ENCODE measurements at regions of chr9 and their contacts with region 1.

Region 1: GRCh38 chr9:33290247-33291030 is at the start of gene NFX1:
- DNase-seq: peak; percentile 96
- H3K4me3 ChIP-seq: peak within 1 kb of the TSS; percentile 72
- H3K27ac ChIP-seq: peak within 1 kb of the TSS; percentile 97
- H3K4me1 ChIP-seq: peaks cover 3% of the 10 kb centered on the region
- H3K27me3 ChIP-seq: no peaks in the 10 kb centered on the region
- CTCF ChIP-seq: peak in 1 of 4 experiments; percentile 33
- POLR2A ChIP-seq: peak; percentile 92
- total RNA-seq, gene NFX1: 30.8 to 39.5 TPM

Region 2: GRCh38 chr9:33329117-33329563 is 38.7 kb after region 1 on chr9:
- intact Hi-C with region 1: loop called (anchors 5 kb)
- DNase-seq: peak; percentile 96
- H3K4me3 ChIP-seq: no peak overlapping the region
- H3K27ac ChIP-seq: peak overlapping the region; percentile 77 to 83
- H3K4me1 ChIP-seq: peaks cover 12% of the 10 kb centered on the region
- H3K27me3 ChIP-seq: no peaks in the 10 kb centered on the region
- CTCF ChIP-seq: no peak
- POLR2A ChIP-seq: no peak

Region 3: DNA sequence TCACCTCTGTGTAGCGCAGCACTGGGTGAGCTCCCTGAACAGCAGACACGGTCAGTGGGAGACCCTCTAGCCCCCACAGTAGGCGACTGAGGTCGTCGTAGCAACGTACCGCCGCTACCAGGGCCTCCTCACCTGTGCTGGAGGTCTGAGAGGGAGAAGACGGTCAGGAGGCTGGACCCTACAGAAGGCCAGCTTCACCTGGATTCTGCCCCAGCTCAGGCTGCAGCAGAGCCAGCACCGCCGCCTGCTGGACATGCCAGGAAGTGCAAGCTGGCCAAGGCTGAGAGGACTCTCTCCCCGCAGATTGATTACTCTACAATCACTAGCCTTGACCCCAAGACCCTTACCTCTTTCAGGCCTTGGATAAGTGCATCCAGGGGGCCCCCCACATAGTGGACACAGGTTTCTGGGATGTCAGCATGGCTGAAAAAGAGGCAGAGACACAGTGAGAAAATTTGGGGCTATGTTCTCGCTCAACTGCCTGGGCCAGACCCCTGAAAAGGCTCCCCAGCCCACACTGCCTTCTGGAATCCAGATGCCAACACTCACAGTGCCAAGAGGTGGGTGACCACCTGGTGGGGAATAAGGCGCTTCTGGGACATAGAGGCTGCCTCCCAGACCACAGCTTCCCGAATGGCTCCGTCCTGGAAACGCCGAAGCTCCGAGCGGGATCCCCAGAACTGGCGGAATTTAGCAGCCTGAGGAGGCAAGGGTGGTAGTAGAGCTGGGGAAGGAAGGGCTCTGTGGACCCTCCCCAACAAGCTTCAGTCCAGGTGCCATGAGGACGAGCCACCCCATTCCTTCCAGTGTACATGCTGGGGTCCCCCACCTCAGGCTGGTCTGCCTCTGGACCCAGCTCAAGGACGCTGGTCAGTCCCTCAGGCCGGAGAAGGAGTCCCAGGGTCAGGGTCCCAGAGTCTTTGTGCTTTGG is 176.4 kb after region 1 on chr9:
- intact Hi-C with region 1: loop called (anchors 5 kb)
- DNase-seq: peak; percentile 64
- H3K4me3 ChIP-seq: no peak overlapping the region
- H3K27ac ChIP-seq: no peak overlapping the region
- H3K4me1 ChIP-seq: peaks cover 3% of the 10 kb centered on the region
- H3K27me3 ChIP-seq: no peaks in the 10 kb centered on the region
- CTCF ChIP-seq: peak; percentile 89 to 98 (median 94)
- POLR2A ChIP-seq: no peak

Measured in prostate gland (tissue), 2 donors.